ENCODE measurements at regions of chr3 and their contacts with region 1.

Region 1: DNA sequence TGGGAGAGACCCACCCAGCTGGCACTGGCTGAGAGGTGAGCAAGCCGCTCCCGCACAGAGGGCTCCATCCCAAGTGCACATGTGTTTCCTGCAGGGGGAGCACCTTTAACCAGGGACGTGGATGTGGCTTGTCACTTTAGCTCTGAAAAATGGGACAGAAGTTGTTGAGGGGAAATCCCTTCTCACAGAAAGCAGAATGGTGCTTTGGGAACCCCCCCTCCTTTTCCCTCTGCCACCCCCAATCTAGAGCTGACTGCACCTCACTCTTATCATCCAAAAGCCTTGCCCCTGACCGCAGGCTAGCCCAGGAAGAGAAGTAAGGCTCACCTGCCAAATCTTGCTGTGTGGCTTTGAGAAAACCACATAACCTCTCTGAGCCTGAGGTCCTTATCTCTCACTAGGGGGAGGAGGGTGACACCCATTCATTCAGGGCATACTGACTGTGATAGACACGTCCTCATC is 77.9 kb downstream of the RPN1 start:
- DNase-seq: peak; percentile 83
- H3K4me3 Mint-ChIP-seq: peak overlapping the region; percentile 13
- H3K27ac Mint-ChIP-seq: peak overlapping the region; percentile 43
- H3K4me1 Mint-ChIP-seq: peaks cover 18% of the 10 kb centered on the region
- H3K27me3 Mint-ChIP-seq: peaks cover 17% of the 10 kb centered on the region

Region 2: DNA sequence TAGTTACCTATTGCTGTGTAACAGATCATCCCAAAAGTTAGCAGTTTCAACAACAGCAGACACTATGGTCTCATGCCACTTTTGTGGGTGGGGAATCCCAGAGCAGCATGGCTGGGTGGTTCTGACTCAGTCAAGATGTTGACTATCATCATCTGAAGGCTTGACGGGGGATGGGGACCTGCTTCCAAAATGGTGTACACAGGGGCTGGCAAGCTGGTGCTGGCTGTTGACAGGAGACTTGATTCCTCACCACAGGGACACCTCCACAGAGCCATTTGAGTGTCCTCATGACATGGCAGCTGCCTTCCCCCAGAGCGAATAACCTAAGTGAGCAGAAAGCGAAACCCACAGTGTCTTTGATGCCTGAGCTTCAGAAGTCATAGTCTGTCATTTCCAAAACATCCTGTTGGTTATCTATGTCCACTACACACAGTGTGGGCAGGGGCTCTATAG is 125.1 kb before region 1 on chr3:
- CTCF ChIA-PET with region 1: no interaction called
- intact Hi-C with region 1: loop called (anchors 1 kb)
- DNase-seq: peak; percentile 95
- H3K4me3 Mint-ChIP-seq: no peak overlapping the region
- H3K27ac Mint-ChIP-seq: peak overlapping the region; percentile 95
- H3K4me1 Mint-ChIP-seq: peaks cover 33% of the 10 kb centered on the region
- H3K27me3 Mint-ChIP-seq: peaks cover 2% of the 10 kb centered on the region

Region 3: GRCh38 chr3:128487813-128488635 is 84.7 kb before region 1 on chr3:
- CTCF ChIA-PET with region 1: no interaction called
- intact Hi-C with region 1: loop called (anchors 5 kb)
- DNase-seq: peak; percentile 44
- H3K4me3 Mint-ChIP-seq: peak overlapping the region; percentile 72
- H3K27ac Mint-ChIP-seq: no peak overlapping the region
- H3K4me1 Mint-ChIP-seq: peaks cover 45% of the 10 kb centered on the region
- H3K27me3 Mint-ChIP-seq: peaks cover 72% of the 10 kb centered on the region

Region 4: GRCh38 chr3:128584412-128585020 is 11.8 kb after region 1 on chr3:
- CTCF ChIA-PET with region 1: interaction called, 16 read pairs
- intact Hi-C with region 1: no loop called
- DNase-seq: peak; percentile 76
- H3K4me3 Mint-ChIP-seq: no peak overlapping the region
- H3K27ac Mint-ChIP-seq: no peak overlapping the region
- H3K4me1 Mint-ChIP-seq: no peaks in the 10 kb centered on the region
- H3K27me3 Mint-ChIP-seq: no peaks in the 10 kb centered on the region

Region 5: GRCh38 chr3:128607710-128608048 is 35.0 kb after region 1 on chr3:
- CTCF ChIA-PET with region 1: interaction called, 13 read pairs
- intact Hi-C with region 1: loop called (anchors 1 kb)
- DNase-seq: no peak
- H3K4me3 Mint-ChIP-seq: no peak overlapping the region
- H3K27ac Mint-ChIP-seq: no peak overlapping the region
- H3K4me1 Mint-ChIP-seq: peaks cover 2% of the 10 kb centered on the region
- H3K27me3 Mint-ChIP-seq: peaks cover 2% of the 10 kb centered on the region

Region 6: GRCh38 chr3:128794770-128795649 is 222.3 kb after region 1 on chr3:
- CTCF ChIA-PET with region 1: no interaction called
- intact Hi-C with region 1: loop called (anchors 2 kb)
- DNase-seq: peak; percentile 83
- H3K4me3 Mint-ChIP-seq: peak overlapping the region; percentile 51
- H3K27ac Mint-ChIP-seq: peak overlapping the region; percentile 91
- H3K4me1 Mint-ChIP-seq: peaks cover 94% of the 10 kb centered on the region
- H3K27me3 Mint-ChIP-seq: no peaks in the 10 kb centered on the region